ENCODE measurements at regions of chr18 and their contacts with region 1.

Region 1: DNA sequence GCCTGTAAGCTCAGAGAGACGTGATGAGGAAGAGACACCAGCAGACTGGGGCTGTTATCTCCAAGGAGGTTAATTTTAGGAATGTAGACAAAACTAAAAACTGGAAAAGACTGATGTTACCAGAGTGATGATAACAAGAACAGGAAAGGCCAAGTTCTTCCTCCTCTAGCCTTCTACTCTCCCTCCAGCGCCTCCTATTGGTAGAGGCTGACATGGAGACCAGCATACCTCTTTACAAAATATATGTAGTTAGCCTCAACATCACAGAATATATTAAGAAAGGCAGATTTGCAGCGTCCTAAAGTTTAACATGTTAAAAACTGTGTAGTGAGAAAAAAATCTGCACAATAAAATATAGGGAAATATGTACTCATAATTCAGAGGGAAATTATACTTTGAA is 66.0 kb downstream of the TCF4 start:
- DNase-seq: peak in 2 of 3 donors; percentile 25 to 72
- ATAC-seq: no peak
- H3K4me3 ChIP-seq: no peak overlapping the region
- H3K27ac ChIP-seq: no peak overlapping the region
- H3K4me1 ChIP-seq: no peaks in the 10 kb centered on the region
- H3K27me3 ChIP-seq: no peaks in the 10 kb centered on the region

Region 2: DNA sequence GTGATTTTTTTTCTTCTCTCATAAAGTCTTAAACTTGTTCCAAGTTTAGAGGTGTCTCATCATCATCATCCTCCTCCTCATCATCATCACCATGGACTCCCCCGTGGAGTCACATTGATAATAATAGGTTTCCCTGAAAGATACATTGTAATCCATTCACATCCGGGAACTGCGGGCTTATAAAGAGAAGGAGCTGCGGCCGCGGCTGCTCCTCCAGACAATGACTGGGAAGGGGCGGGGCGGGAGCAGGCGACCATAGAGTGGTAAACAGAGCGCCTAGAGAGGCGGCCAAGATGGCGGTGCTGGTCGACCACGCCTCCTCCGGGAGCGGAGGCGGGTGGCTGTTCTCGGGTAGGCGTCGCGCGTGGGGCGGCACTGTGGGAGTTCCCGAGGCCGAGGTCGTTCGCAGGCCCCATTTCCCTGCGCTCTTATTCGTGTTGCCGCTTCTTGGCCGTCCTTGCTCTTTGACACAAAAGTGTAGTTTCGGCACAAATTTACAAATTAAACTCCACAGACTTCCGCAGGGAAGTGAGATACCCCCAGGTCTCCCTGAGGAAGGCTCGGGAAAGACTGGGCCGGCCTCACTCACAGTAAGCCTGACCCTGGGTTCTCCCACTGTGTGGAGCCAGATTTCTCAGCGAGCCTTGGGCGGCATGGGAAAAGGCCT is 67.7 kb after region 1 on chr18:
- intact Hi-C with region 1: loop called in 1 of 4 experiments (anchors 10 kb)
- DNase-seq: peak; percentile 98 to 99 (median 99)
- ATAC-seq: peak; percentile 97 to 98
- H3K4me3 ChIP-seq: peak overlapping the region; percentile 100
- H3K27ac ChIP-seq: peak overlapping the region; percentile 71
- H3K4me1 ChIP-seq: peaks cover 2% of the 10 kb centered on the region
- H3K27me3 ChIP-seq: no peaks in the 10 kb centered on the region